ENCODE measurements at regions of chr18 and their contacts with region 1.

Region 1: GRCh38 chr18:31942999-31943865 is at the start of gene TRAPPC8:
- DNase-seq: peak; percentile 99
- ATAC-seq: peak; percentile 99
- H3K4me3 ChIP-seq: peak within 1 kb of the TSS; percentile 63 to 80
- H3K27ac ChIP-seq: peak within 1 kb of the TSS; percentile 35 to 72
- H3K4me1 ChIP-seq: no peaks in the 10 kb centered on the region
- H3K27me3 ChIP-seq: no peaks in the 10 kb centered on the region
- total RNA-seq, gene TRAPPC8: 36.3 to 47.1 TPM

Region 2: GRCh38 chr18:31722369-31722957 is 220.8 kb before region 1 on chr18:
- intact Hi-C with region 1: loop called in 1 of 2 experiments (anchors 5 kb)
- DNase-seq: peak; percentile 79 to 86
- ATAC-seq: peak; percentile 90
- H3K4me3 ChIP-seq: no peak overlapping the region
- H3K27ac ChIP-seq: no peak overlapping the region
- H3K4me1 ChIP-seq: no peaks in the 10 kb centered on the region
- H3K27me3 ChIP-seq: no peaks in the 10 kb centered on the region

Region 3: DNA sequence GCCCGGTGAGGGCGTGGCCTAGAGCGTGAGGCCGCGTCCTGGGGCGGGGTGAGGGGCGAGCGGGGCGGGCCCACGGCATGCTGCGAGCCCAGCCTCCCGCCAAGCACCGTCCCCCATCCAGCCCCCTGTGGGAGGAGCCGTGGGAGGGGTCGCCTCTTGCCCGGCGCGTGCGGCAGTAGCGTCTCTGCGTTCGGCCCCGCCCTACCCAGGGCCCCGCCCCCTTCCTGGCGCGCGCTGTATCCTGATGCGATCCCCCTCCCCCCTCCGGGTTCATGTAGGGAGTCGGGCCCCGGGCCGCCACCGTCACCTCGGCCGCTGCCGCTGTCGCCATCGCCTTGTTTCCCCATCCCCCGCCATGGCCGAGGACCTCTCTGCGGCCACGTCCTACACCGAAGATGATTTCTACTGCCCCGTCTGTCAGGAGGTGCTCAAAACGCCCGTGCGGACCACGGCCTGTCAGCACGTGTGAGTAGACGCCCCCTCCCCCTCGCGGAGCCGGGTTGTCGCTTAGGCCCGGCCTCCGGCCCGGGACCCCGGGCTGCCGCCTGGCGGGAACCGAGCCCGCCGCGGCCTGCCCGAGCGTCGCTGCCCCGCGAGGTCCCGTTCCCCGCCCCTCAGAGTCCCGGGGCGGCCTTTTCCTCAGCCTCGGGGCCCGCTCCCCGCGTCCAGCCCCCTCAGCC is 149.3 kb after region 1 on chr18:
- intact Hi-C with region 1: loop called (anchors 2 to 10 kb)
- DNase-seq: peak; percentile 100
- ATAC-seq: peak; percentile 99
- H3K4me3 ChIP-seq: peak overlapping the region; percentile 51 to 57
- H3K27ac ChIP-seq: peak overlapping the region; percentile 3 to 50
- H3K4me1 ChIP-seq: no peaks in the 10 kb centered on the region
- H3K27me3 ChIP-seq: no peaks in the 10 kb centered on the region

Region 4: GRCh38 chr18:32276906-32277305 is 333.7 kb after region 1 on chr18:
- intact Hi-C with region 1: loop called in 1 of 2 experiments (anchors 5 kb)
- DNase-seq: no peak
- ATAC-seq: no peak
- H3K4me3 ChIP-seq: no peak overlapping the region
- H3K27ac ChIP-seq: peak overlapping the region; percentile 75 to 99
- H3K4me1 ChIP-seq: peaks cover 4 to 24% of the 10 kb centered on the region in 2 donors
- H3K27me3 ChIP-seq: no peaks in the 10 kb centered on the region